ENCODE measurements at regions of chr3 and their contacts with region 1.

Region 1: DNA sequence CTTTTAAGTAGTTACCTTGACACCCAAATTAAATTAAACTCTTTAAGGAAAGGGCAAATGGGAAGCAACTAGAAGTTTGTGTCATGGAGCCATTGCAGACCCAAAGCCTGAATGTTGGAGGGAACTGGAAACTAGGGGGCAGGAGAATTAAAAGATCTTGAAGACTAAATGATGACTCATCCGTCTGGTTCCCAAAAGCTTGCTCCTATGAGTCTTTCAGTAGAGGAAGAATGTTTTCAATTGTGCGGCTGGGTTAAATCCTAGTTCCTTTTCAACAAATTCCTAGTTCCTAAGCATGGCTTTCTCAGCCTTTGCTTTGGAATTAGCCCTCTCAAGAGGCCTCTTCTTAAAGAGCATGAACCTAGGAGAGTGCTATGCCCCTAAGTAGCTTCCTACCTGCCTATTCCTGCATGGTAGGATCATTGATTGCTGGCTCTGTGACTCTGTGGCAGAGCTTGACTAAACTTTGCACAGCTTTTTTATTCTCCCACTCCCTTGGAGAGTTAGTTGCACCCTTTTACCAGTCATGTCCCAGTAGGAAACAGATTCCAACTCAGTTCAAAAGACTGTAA is 17.7 kb downstream of the CLEC3B start:
- DNase-seq: no peak
- ATAC-seq: peak; percentile 30
- H3K4me3 ChIP-seq: no peak overlapping the region
- H3K27ac ChIP-seq: peak overlapping the region in 1 of 2 donors; percentile 95
- H3K4me1 ChIP-seq: peaks cover 0 to 3% of the 10 kb centered on the region in 2 donors
- H3K27me3 ChIP-seq: no peaks in the 10 kb centered on the region

Region 2: DNA sequence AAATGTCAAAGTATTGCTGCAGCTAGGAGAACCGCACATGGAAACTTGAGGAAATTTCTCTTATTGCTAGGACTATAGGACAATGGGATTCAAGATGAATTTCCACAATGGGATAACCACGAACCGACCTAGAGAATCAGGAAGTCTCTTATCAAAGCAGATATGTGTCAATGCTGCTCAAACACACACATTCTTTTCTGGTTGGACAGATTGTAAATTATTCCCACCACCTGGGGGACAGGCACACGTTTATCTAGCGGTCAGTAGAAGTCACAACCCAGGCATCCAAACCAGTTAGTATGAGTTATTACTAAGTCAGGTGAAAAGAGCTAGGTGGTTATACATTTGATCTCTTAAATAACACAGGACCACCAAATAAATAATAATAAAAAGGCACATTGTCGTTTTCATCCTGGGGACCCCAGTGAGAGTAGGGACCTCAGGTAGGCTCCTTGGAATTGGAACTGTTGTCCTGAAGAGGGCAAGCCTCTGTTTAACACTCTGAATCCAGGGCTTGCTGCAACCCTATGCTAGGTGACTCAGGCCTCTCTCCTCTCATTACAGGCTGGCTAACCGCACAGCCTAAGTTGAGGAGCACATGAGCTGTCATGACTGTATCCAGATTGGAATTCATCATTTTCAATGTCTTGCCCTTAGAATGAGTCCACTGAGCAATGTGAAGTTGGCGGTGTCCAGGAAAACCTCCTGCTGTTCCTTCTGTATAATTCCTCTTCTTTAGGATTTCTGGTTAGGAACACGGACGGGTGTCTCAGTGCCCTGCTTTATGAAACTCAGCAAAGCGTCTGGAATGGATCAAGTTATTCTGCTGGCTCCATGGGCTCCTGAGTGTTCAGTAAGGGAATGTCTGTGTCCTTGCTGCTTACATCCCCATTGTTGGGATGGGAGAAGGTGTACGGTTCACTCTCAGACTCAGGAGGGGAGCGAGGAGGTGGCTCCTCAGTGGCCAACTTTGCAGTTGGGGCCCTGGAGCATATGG is 41.3 kb after region 1 on chr3:
- intact Hi-C with region 1: loop called in 1 of 2 experiments (anchors 5 kb)
- DNase-seq: no peak
- ATAC-seq: no peak
- H3K4me3 ChIP-seq: no peak overlapping the region
- H3K27ac ChIP-seq: no peak overlapping the region
- H3K4me1 ChIP-seq: peaks cover 0 to 5% of the 10 kb centered on the region in 2 donors
- H3K27me3 ChIP-seq: no peaks in the 10 kb centered on the region

Region 3: GRCh38 chr3:45210308-45211041 is 166.7 kb after region 1 on chr3:
- intact Hi-C with region 1: loop called (anchors 1 to 2 kb)
- DNase-seq: peak; percentile 93 to 95
- ATAC-seq: peak; percentile 91
- H3K4me3 ChIP-seq: no peak overlapping the region
- H3K27ac ChIP-seq: no peak overlapping the region
- H3K4me1 ChIP-seq: no peaks in the 10 kb centered on the region
- H3K27me3 ChIP-seq: no peaks in the 10 kb centered on the region